ENCODE measurements at regions of chr1 and their contacts with region 1.

Region 1: DNA sequence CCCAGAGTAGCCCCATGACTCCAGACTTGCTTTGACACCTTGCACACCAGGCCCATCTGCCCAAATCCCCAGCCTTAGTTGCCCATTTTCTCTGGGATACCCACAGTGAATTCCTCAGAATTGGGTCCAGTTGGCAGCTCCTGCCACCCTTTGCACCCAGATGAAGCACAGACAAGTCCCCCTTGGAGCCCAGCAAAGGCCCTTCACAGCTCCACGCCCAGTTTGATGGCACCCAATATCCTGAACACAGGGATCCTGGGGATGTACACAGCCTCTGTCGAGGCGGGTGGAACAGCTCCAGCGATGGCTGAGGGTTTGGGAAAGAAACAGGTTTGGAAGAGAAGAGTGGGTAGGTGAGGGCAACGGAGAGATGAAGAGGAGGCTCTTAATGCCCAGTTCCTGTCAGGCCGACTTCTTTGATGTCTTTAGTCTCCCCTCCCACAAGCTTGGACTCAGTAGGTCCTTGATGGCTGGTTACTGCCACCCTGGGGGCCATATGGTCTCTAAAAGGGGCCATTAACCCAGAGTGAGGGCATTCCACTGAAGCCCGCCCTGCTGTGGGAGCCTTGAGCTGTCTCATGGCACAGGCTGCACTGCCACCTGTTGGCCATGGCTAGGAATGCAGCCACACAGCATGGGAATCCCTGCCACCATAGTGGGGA is 21.7 kb downstream of the TMEM53 start:
- DNase-seq: peak; percentile 64 to 82
- ATAC-seq: peak; percentile 66 to 88 (median 78)
- H3K4me3 ChIP-seq: no peak overlapping the region
- H3K27ac ChIP-seq: no peak overlapping the region
- H3K4me1 ChIP-seq: peaks cover 0 to 10% (median 0%) of the 10 kb centered on the region in 9 donors
- H3K27me3 ChIP-seq: no peaks in the 10 kb centered on the region
- CTCF ChIP-seq: peak; percentile 84 to 97 (median 95)

Region 2: DNA sequence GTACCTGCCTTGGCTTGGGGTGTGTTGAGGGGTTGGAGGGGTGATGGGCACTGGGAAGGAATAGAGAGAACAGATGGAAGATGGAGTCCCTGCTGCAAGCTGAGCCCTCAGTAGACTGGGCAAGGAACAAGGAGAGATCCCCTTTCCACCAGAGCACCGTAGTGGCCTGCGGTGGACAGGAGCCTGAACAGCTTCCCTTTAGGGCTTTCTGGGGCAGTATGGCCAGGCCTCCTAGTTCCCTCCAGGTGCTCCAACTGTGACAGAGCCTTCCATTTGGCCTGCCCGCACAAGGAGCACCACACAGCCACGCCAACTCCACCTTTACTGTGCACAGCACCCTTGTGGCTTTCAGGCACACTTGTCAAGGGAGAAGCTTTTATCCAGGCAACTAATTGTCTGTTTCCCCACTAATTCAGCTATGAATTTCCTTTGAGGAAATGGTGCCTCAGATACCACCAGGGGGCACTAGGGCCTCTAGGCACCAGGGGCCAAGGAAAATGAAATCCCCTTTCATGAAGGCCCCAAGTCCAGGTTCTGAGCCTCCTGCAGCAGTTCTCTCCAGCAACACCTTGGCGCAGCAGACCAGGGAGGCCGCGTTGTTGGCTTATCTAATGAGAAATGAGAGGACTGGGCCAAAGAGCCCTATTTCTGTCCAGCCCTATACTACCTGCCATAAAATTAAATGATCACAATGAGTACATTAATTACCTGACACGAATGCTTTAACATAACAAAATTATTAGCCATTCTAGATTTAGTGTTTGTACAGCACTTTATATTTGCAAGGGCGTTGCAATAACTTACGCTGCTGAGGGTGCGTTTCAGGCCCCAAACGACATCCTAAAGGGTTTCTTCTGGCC is 274.4 kb before region 1 on chr1:
- intact Hi-C with region 1: loop called in 2 of 10 experiments (anchors 5 kb)
- DNase-seq: peak; percentile 15 to 51
- ATAC-seq: peak in 6 of 8 donors; percentile 25 to 62 (median 46)
- H3K4me3 ChIP-seq: no peak overlapping the region
- H3K27ac ChIP-seq: no peak overlapping the region
- H3K4me1 ChIP-seq: no peaks in the 10 kb centered on the region
- H3K27me3 ChIP-seq: no peaks in the 10 kb centered on the region
- CTCF ChIP-seq: peak; percentile 63 to 85 (median 79)

Region 3: GRCh38 chr1:44571712-44572571 is 80.6 kb before region 1 on chr1:
- intact Hi-C with region 1: loop called in 1 of 10 experiments (anchors 10 kb)
- DNase-seq: no peak
- ATAC-seq: no peak
- H3K4me3 ChIP-seq: no peak overlapping the region
- H3K27ac ChIP-seq: no peak overlapping the region
- H3K4me1 ChIP-seq: no peaks in the 10 kb centered on the region
- H3K27me3 ChIP-seq: peaks cover 0 to 11% (median 0%) of the 10 kb centered on the region in 7 donors
- CTCF ChIP-seq: peak in 7 of 9 donors; percentile 37 to 53 (median 42)

Region 4: GRCh38 chr1:44609412-44609767 is 43.2 kb before region 1 on chr1:
- intact Hi-C with region 1: loop called in 8 of 10 experiments (anchors 1 to 2 kb)
- DNase-seq: peak; percentile 48 to 52
- ATAC-seq: peak in 7 of 8 donors; percentile 66 to 88 (median 74)
- H3K4me3 ChIP-seq: no peak overlapping the region
- H3K27ac ChIP-seq: no peak overlapping the region
- H3K4me1 ChIP-seq: no peaks in the 10 kb centered on the region
- H3K27me3 ChIP-seq: peaks cover 0 to 24% (median 4%) of the 10 kb centered on the region in 7 donors
- CTCF ChIP-seq: peak; percentile 25 to 65 (median 56)

Region 5: GRCh38 chr1:44696789-44697345 is 44.3 kb after region 1 on chr1:
- intact Hi-C with region 1: no loop called
- DNase-seq: no peak
- ATAC-seq: peak in 3 of 8 donors; percentile 37 to 67 (median 55)
- H3K4me3 ChIP-seq: no peak overlapping the region
- H3K27ac ChIP-seq: peak overlapping the region in 1 of 10 donors; percentile 10
- H3K4me1 ChIP-seq: peaks cover 0 to 20% (median 0%) of the 10 kb centered on the region in 9 donors
- H3K27me3 ChIP-seq: peaks cover 0 to 2% (median 0%) of the 10 kb centered on the region in 7 donors
- CTCF ChIP-seq: no peak

Measured in heart right ventricle (tissue), 16 donors.